Activated CD4-positive, alpha-beta T cell treated with anti-CD3 and anti-CD28 coated beads, Interleukin-2, amount 10 ng/mL, durations not matched to agents 24 days and 14 days (primary cell): ENCODE measurements at regions of chr2 and their contacts with region 1.

Region 1: DNA sequence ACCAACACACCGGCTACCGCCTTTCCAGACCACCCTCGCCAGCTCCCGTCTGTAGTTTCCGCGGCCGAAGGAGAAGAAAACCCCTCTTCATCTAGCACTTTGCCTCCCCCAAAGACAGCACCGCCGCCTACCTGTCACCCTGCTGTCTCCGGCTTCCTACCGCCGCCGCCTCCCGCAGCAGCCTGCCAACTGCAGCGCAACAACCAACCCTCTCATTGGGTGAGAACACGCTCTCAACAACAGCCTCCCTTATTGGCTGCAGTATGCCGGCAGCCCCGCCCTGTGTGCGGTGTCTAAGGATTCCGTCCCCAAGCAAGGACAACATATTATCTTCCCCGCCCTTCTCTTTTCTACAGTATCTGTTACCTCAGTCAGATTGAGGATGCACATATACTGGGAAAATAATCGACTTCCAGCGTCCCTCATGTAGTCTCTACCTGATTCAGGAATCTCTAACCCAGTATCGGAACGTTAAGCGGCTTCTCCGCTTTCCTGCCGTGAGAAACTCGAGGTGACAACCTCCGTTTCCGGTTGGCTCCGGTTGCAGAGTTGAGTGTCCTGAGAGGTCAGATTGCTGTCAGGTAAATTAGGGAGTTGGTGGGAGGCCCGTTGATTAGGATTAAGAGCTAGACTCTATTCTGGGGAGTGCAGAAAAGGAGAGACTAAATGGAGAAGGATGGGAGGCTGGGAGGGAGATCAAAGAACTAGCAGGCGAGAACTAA is at the starts of genes HYCC2 and NDUFB3:
- DNase-seq: peak; percentile 98
- H3K4me3 Mint-ChIP-seq: peak within 1 kb of the TSS; percentile 92
- H3K27ac Mint-ChIP-seq: peak within 1 kb of the TSS; percentile 91
- H3K4me1 Mint-ChIP-seq: peaks cover 37% of the 10 kb centered on the region
- H3K27me3 Mint-ChIP-seq: no peaks in the 10 kb centered on the region
- total RNA-seq, gene HYCC2: 24.4 and 26.2 TPM in 2 replicates
- total RNA-seq, gene NDUFB3: 112 and 113 TPM in 2 replicates

Region 2: GRCh38 chr2:200864176-200864976 is 207.3 kb before region 1 on chr2 and contains the start of gene CLK1:
- intact Hi-C with region 1: loop called (anchors 1 kb)
- DNase-seq: peak; percentile 99
- H3K4me3 Mint-ChIP-seq: peak within 1 kb of the TSS; percentile 91
- H3K27ac Mint-ChIP-seq: peak within 1 kb of the TSS; percentile 94
- H3K4me1 Mint-ChIP-seq: peaks cover 32% of the 10 kb centered on the region
- H3K27me3 Mint-ChIP-seq: no peaks in the 10 kb centered on the region
- total RNA-seq, gene CLK1: 99.3 and 100 TPM in 2 replicates

Region 3: GRCh38 chr2:200901459-200902072 is 170.1 kb before region 1 on chr2:
- intact Hi-C with region 1: loop called (anchors 1 kb)
- DNase-seq: peak; percentile 92
- H3K4me3 Mint-ChIP-seq: no peak overlapping the region
- H3K27ac Mint-ChIP-seq: peak overlapping the region; percentile 61
- H3K4me1 Mint-ChIP-seq: peaks cover 19% of the 10 kb centered on the region
- H3K27me3 Mint-ChIP-seq: no peaks in the 10 kb centered on the region

Region 4: DNA sequence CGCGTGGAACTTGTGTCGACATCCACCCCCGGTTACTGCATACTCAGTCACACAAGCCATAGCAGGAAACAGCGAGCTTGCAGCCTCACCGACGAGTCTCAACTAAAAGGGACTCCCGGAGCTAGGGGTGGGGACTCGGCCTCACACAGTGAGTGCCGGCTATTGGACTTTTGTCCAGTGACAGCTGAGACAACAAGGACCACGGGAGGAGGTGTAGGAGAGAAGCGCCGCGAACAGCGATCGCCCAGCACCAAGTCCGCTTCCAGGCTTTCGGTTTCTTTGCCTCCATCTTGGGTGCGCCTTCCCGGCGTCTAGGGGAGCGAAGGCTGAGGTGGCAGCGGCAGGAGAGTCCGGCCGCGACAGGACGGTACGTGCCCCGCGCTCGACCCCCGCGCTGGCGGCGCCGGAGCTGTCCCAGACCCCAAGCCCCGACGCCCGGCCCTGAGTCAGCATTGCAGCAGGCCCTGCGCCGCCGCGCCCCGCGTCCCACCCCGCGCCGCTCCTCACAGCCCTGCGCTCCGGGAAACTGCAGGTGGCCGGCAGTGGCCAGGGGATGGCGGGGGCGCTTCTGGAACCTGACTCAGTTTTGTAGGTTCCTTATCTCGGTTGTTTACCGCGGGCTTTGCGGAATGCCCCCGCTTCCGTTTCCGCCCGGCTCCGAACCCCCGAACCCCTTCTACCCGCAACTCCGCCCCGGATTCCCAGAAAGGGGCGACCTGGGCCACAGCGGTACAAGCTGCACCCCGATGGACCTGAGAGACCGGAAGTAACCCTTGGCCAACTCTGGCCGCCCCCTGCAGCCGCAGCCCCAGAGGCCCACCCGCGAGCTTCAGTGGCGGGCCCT is 44.7 kb after region 1 on chr2 and contains the start of gene CFLAR:
- intact Hi-C with region 1: loop called (anchors 1 kb)
- DNase-seq: peak; percentile 96
- H3K4me3 Mint-ChIP-seq: peak within 1 kb of the TSS; percentile 96
- H3K27ac Mint-ChIP-seq: peak within 1 kb of the TSS; percentile 97
- H3K4me1 Mint-ChIP-seq: peaks cover 32% of the 10 kb centered on the region
- H3K27me3 Mint-ChIP-seq: no peaks in the 10 kb centered on the region
- total RNA-seq, gene CFLAR: 402 and 415 TPM in 2 replicates

Region 5: DNA sequence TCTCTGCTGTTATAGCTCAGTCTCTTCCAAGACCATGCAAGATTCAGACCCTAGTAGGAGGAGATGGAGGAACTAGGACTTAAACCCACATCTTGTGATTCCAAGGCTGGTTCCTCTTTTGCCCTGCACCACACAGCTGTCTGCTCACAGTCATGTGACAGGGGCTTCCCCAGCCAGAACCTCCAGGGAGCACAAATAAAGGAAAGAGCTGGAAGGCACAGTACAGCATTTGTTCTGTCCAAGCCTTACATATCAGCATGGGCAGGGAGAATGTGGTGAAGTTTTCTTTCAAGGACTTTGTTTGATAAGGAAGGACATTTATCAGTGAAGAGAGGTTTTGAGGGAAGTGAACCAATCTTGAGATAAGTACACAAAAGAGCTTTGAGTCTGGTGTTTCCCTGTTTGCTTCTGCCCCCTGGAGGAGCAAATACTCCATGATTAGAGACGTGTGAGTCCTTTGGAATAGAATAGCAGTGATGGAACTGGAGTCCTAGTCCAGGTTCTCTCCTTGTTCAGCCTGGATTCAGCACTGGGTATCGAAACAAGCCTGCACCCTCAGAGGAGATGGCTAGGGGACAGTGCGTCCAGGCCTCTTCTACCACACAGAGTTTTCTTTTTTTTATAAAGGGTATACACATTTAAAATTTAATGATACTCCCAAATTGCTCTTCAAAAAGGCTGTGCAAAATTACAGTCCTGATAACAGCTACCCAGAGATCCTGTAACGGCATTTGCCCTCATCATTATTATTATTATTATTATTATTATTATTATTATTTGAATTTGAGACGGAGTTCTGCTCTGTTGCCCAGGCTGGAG is 86.7 kb after region 1 on chr2:
- intact Hi-C with region 1: loop called (anchors 5 kb)
- DNase-seq: peak; percentile 89
- H3K4me3 Mint-ChIP-seq: peak overlapping the region; percentile 42
- H3K27ac Mint-ChIP-seq: peak overlapping the region; percentile 77
- H3K4me1 Mint-ChIP-seq: peaks cover 18% of the 10 kb centered on the region
- H3K27me3 Mint-ChIP-seq: no peaks in the 10 kb centered on the region

Region 6: GRCh38 chr2:201451292-201452057 is 379.8 kb after region 1 on chr2 and contains the starts of genes STRADB and TRAK2:
- intact Hi-C with region 1: loop called (anchors 5 kb)
- DNase-seq: peak; percentile 99
- H3K4me3 Mint-ChIP-seq: peak within 1 kb of the TSS; percentile 95
- H3K27ac Mint-ChIP-seq: peak within 1 kb of the TSS; percentile 97
- H3K4me1 Mint-ChIP-seq: peaks cover 42% of the 10 kb centered on the region
- H3K27me3 Mint-ChIP-seq: peaks cover 8% of the 10 kb centered on the region
- total RNA-seq, gene STRADB: 18.5 and 20.1 TPM in 2 replicates
- total RNA-seq, gene TRAK2: 26.5 and 29.1 TPM in 2 replicates